Right lobe of liver (tissue), 6 donors: ENCODE measurements at regions of chr15 and their contacts with region 1.

Region 1: DNA sequence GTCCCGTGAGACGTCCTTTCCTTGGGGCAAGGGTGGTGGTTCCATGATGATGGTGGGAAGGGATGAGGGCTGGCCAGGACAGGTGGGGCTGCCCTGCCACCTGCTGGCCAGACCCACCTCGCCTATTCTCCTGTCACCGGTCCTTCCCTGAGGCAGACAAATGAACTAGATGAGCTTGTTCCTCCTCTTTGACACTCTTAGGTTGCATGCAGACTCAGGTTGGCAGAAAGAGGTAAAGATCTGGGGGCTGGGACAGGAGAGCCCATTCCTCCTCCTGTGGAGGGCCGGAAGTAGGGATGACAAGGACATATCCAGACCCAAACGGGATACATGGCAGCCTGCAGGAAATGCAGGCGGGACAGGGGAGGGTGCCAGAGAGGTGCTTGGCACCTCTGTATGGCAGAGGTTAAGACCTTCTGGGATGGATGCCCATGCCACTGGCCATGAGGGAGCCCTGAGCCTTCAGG is 38.6 kb downstream of the ACSBG1 start:
- DNase-seq: peak in 1 of 3 donors; percentile 47
- ATAC-seq: peak; percentile 92 to 98 (median 93)
- H3K4me3 ChIP-seq: no peak overlapping the region
- H3K27ac ChIP-seq: no peak overlapping the region
- H3K4me1 ChIP-seq: no peaks in the 10 kb centered on the region
- H3K27me3 ChIP-seq: no peaks in the 10 kb centered on the region
- CTCF ChIP-seq: peak; percentile 74 to 86 (median 80)
- POLR2A ChIP-seq: no peak

Region 2: GRCh38 chr15:78108299-78109084 is 87.3 kb before region 1 on chr15:
- intact Hi-C with region 1: loop called (anchors 5 kb)
- DNase-seq: peak; percentile 88 to 89 (median 88)
- ATAC-seq: peak; percentile 94 to 96 (median 95)
- H3K4me3 ChIP-seq: no peak overlapping the region
- H3K27ac ChIP-seq: no peak overlapping the region
- H3K4me1 ChIP-seq: no peaks in the 10 kb centered on the region
- H3K27me3 ChIP-seq: no peaks in the 10 kb centered on the region
- CTCF ChIP-seq: peak; percentile 95 to 99 (median 96)
- POLR2A ChIP-seq: no peak

Region 3: GRCh38 chr15:78120523-78120922 is 75.2 kb before region 1 on chr15:
- intact Hi-C with region 1: loop called in 1 of 2 experiments (anchors 5 kb)
- DNase-seq: no peak
- ATAC-seq: no peak
- H3K4me3 ChIP-seq: no peak overlapping the region
- H3K27ac ChIP-seq: no peak overlapping the region
- H3K4me1 ChIP-seq: peaks cover 0 to 2% (median 0%) of the 10 kb centered on the region in 4 donors
- H3K27me3 ChIP-seq: no peaks in the 10 kb centered on the region
- CTCF ChIP-seq: no peak
- POLR2A ChIP-seq: no peak

Region 4: GRCh38 chr15:78234515-78235040 is 38.8 kb after region 1 on chr15 and contains the start of gene ACSBG1:
- intact Hi-C with region 1: loop called in 1 of 2 experiments (anchors 5 kb)
- DNase-seq: no peak
- ATAC-seq: no peak
- H3K4me3 ChIP-seq: no peak within 1 kb of the TSS
- H3K27ac ChIP-seq: no peak within 1 kb of the TSS
- H3K4me1 ChIP-seq: no peaks in the 10 kb centered on the region
- H3K27me3 ChIP-seq: no peaks in the 10 kb centered on the region
- CTCF ChIP-seq: no peak
- POLR2A ChIP-seq: no peak
- total RNA-seq, gene ACSBG1: not detected

Region 5: DNA sequence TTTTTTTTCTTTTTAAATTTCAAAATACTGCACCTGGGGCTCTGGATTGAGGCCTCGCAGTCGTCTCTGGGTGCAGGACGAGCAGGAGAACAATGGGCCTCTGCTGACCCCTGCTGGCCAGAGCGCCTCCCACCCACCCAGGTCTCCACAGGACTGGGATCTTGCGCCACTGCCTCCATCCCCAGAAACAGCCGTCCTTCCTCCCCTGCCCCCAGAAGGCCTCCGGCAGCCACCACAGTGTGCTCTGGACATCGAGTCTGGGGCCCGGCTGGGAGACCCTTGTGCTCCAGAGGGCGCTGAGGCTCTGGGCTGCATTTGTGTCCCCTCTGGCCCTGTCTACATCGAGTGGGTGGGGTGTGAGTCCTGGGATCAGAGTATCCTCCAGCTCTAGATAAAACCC is 45.2 kb after region 1 on chr15:
- intact Hi-C with region 1: loop called (anchors 5 kb)
- DNase-seq: peak; percentile 87 to 89 (median 88)
- ATAC-seq: peak; percentile 98 to 99 (median 98)
- H3K4me3 ChIP-seq: no peak overlapping the region
- H3K27ac ChIP-seq: no peak overlapping the region
- H3K4me1 ChIP-seq: no peaks in the 10 kb centered on the region
- H3K27me3 ChIP-seq: no peaks in the 10 kb centered on the region
- CTCF ChIP-seq: peak; percentile 84 to 92 (median 90)
- POLR2A ChIP-seq: no peak